Activated T-helper 2 cell treated with anti-CD3 and anti-CD28 coated beads, Interferon-gamma antibody, Interleukin-2, Interleukin-4, amounts not matched to agents 10 μg/mL and 5 μg/mL and 100 μg/mL, durations not matched to agents 14 hours and 24 hours and 36 hours (primary cell): ENCODE measurements at regions of chr1 and their contacts with region 1.

Region 1: DNA sequence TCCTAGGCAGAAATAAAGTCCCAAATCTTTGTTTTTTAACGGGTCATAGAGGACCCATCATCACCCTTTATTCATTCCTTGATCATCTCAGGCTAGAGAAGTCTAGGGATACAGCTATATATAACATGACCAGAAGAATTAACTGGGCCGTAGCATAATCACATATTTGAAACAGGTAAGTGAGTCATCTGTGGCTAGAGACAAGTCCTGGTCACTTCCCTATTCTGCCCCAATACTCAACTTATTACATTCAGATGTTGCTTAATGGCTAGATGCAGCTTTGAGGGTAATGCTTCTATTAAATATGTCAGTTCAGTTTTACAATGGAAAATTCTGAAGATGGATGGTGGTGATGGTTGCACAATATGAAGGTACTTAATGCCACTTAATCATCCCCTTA is 47.0 kb downstream of the EXO1 start:
- DNase-seq: no peak
- H3K4me3 Mint-ChIP-seq: no peak overlapping the region
- H3K27ac Mint-ChIP-seq: no peak overlapping the region
- H3K4me1 Mint-ChIP-seq: no peaks in the 10 kb centered on the region
- H3K27me3 Mint-ChIP-seq: no peaks in the 10 kb centered on the region

Region 2: GRCh38 chr1:241101622-241102021 is 793.4 kb before region 1 on chr1:
- intact Hi-C with region 1: no loop called
- DNase-seq: no peak
- H3K4me3 Mint-ChIP-seq: no peak overlapping the region
- H3K27ac Mint-ChIP-seq: no peak overlapping the region
- H3K4me1 Mint-ChIP-seq: no peaks in the 10 kb centered on the region
- H3K27me3 Mint-ChIP-seq: no peaks in the 10 kb centered on the region

Region 3: DNA sequence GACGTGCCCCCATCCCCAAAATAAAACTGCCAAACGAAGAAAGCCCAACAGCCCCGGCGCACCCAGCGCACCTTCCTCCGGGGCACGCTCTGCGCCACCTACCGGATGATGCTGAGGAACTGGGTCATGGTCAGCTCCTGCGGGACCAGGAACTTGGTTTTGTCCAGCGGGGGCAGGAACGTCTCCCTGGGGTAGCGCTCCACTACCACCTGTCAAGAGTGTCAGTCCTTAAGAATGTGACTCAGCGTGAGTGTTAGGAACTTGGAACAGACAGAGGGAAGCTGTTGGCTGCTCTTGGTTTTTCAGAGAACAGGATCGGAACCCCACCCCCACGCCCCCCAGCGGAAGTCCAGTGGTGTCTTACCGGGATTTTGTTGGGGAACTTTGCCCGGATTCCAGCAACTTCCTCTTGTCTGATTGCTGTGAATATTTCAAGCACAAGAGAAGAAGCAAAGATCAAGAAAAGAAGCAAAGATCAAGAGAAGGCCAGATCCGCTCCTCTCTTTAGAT is 103.5 kb after region 1 on chr1:
- intact Hi-C with region 1: loop called (anchors 10 kb)
- DNase-seq: peak; percentile 26
- H3K4me3 Mint-ChIP-seq: peak overlapping the region; percentile 68
- H3K27ac Mint-ChIP-seq: no peak overlapping the region
- H3K4me1 Mint-ChIP-seq: peaks cover 6% of the 10 kb centered on the region
- H3K27me3 Mint-ChIP-seq: no peaks in the 10 kb centered on the region

Region 4: GRCh38 chr1:242017584-242018233 is 122.7 kb after region 1 on chr1:
- intact Hi-C with region 1: loop called (anchors 1 kb)
- DNase-seq: no peak
- H3K4me3 Mint-ChIP-seq: no peak overlapping the region
- H3K27ac Mint-ChIP-seq: no peak overlapping the region
- H3K4me1 Mint-ChIP-seq: no peaks in the 10 kb centered on the region
- H3K27me3 Mint-ChIP-seq: no peaks in the 10 kb centered on the region

Region 5: GRCh38 chr1:242219298-242219901 is 324.4 kb after region 1 on chr1:
- intact Hi-C with region 1: no loop called
- DNase-seq: no peak
- H3K4me3 Mint-ChIP-seq: no peak overlapping the region
- H3K27ac Mint-ChIP-seq: no peak overlapping the region
- H3K4me1 Mint-ChIP-seq: no peaks in the 10 kb centered on the region
- H3K27me3 Mint-ChIP-seq: no peaks in the 10 kb centered on the region